ENCODE measurements at regions of chr18 and their contacts with region 1.

Region 1: GRCh38 chr18:5693699-5694294 is 150.0 kb upstream of the EPB41L3 start:
- ATAC-seq: no peak
- H3K4me3 ChIP-seq: no peak overlapping the region
- H3K27ac ChIP-seq: no peak overlapping the region
- H3K4me1 ChIP-seq: no peaks in the 10 kb centered on the region

Region 2: DNA sequence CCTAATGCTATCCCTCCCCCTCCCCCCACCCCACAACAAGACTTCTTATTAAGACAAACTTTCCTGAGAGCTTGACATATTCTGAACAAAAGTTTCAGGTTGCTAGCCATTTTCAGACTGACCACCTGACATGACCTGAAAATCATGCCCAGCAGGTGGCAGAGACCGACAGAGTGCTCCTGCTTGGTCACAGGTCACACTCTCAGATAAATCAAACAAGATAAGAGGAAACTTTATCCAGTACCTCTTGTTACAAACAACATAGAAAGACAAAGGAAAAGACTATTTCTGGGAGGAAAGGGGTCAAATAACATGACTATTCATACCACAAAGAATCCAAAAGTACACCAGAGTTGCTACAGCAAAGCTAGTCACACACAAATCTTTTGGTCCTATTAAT is 94.1 kb after region 1 on chr18:
- in situ Hi-C with region 1: loop called in 1 of 9 experiments (anchors 25 kb)
- ATAC-seq: no peak
- H3K4me3 ChIP-seq: no peak overlapping the region
- H3K27ac ChIP-seq: no peak overlapping the region
- H3K4me1 ChIP-seq: no peaks in the 10 kb centered on the region

Measured in motor neuron (in vitro differentiated cells).